ENCODE measurements at regions of chr12 and their contacts with region 1.

Region 1: DNA sequence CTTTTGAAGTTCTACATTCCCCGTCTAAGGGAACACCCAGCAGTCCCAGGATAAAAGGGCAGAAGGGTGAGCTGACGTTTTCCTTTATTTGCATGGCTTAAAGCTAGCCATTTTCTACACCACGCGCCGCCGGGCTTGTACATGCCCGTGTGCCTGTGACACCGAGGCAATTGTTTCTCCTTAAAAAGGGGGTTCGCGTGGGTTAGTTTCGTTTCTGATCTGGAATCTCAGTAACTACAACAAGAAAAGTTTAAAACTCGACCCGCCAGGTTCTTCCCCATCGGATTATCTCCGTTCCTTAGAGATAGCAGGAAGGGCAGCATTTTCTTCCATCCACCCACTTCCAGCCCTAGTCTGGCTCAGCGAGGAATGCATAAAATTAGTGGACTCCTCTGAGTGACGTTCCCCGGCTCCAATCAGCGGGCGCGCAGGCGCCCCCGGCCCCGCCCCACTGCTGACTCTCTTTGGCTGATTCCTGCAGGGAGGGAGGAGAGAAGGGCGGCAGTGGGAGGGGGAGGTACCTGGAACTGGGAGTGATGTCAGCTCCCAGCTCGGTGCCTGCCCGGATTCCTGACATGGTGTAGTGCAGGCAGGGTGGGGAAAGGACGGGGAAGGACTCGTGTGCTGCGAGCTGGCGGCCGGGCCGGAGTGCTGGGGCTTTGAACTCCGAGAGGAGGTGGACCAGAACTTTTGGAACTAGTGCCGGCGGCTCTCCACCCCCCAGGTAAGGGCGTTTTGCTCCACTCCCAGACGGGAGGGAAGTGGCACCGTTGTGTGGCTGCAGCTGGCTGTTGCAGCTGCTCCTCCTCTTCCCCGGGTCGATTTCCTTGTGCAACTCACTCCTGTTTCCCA is at the start of gene PPFIBP1:
- DNase-seq: peak; percentile 99
- H3K4me3 Mint-ChIP-seq: peak within 1 kb of the TSS; percentile 85
- H3K27ac Mint-ChIP-seq: peak within 1 kb of the TSS; percentile 90
- H3K4me1 Mint-ChIP-seq: peaks cover 23% of the 10 kb centered on the region
- H3K27me3 Mint-ChIP-seq: no peaks in the 10 kb centered on the region
- CTCF ChIP-seq: no peak
- total RNA-seq, gene PPFIBP1: 82.6 and 87.7 TPM in 2 replicates

Region 2: DNA sequence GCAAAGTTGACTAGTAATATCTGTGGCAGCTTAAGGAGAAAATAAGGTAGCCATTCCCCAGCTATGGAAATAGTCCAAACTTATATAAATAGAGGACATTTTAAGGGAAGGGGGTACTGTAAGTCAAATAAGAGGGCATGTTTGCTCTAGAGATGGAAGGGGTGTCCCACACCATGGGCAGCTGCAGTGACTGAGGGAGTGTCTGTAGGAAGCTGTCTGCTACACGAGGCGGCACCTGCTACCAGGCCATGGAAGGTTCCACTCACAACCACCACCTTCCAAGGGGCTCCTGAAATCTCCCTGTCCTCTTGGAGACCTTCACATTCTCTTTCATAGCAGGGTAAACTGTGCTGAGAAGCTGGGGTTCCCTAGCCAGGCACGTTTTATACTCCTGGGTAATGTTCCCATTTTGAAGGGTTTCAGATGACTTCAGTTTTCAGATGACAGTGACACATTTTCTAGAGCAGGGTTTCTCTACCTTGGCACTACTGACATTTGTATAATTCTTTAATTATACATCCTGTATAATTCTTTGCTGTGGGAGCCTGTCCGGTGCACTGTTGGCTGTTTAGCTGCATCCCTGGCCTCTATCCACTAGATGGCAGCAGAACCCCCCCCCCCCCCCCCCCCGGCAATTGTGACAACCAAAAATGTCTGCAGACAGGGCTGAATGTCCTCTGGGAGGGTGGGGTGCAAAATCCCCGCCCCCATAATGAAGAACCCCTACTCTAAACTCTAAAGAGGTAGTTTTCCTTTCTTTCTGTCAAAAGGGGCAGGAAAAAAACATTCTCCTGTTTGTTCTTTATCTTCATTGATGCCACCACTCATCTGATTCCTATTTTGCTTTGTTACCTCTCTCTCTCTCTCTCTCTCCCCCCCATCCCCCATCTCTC is 88.9 kb before region 1 on chr12:
- CTCF ChIA-PET with region 1: interaction called, 28 read pairs
- POLR2A ChIA-PET with region 1: interaction called, 43 read pairs
- intact Hi-C with region 1: loop called (anchors 2 kb)
- DNase-seq: peak; percentile 19
- H3K4me3 Mint-ChIP-seq: no peak overlapping the region
- H3K27ac Mint-ChIP-seq: no peak overlapping the region
- H3K4me1 Mint-ChIP-seq: peaks cover 7% of the 10 kb centered on the region
- H3K27me3 Mint-ChIP-seq: no peaks in the 10 kb centered on the region
- CTCF ChIP-seq: peak; percentile 57

Region 3: DNA sequence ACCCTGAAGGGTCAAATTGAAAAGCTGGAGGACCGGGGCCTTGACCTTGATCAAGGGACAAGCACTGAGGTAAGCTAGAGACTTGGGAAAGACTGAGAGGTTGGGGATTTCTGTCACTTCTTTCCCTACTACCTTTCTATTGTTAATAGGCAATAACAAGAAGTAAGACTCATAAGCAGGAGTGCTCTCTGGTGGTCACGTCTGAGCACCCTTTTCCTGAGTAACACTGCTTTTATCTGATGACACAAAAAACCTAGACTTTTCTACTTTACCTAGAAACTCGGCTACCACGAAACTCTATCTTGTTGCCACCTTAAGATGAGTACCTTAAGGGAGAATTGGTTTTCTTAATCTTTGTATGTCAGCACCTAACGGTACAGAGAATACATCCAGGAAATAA is 35.4 kb before region 1 on chr12:
- CTCF ChIA-PET with region 1: no interaction called
- POLR2A ChIA-PET with region 1: no interaction called
- intact Hi-C with region 1: no loop called
- DNase-seq: no peak
- H3K4me3 Mint-ChIP-seq: no peak overlapping the region
- H3K27ac Mint-ChIP-seq: no peak overlapping the region
- H3K4me1 Mint-ChIP-seq: no peaks in the 10 kb centered on the region
- H3K27me3 Mint-ChIP-seq: no peaks in the 10 kb centered on the region
- CTCF ChIP-seq: no peak

Region 4: GRCh38 chr12:27534060-27534764 is 10.3 kb after region 1 on chr12:
- CTCF ChIA-PET with region 1: interaction called, 17 read pairs
- POLR2A ChIA-PET with region 1: interaction called, 129 read pairs
- intact Hi-C with region 1: no loop called
- DNase-seq: no peak
- H3K4me3 Mint-ChIP-seq: no peak overlapping the region
- H3K27ac Mint-ChIP-seq: peak overlapping the region; percentile 0
- H3K4me1 Mint-ChIP-seq: peaks cover 26% of the 10 kb centered on the region
- H3K27me3 Mint-ChIP-seq: no peaks in the 10 kb centered on the region
- CTCF ChIP-seq: no peak

Region 5: DNA sequence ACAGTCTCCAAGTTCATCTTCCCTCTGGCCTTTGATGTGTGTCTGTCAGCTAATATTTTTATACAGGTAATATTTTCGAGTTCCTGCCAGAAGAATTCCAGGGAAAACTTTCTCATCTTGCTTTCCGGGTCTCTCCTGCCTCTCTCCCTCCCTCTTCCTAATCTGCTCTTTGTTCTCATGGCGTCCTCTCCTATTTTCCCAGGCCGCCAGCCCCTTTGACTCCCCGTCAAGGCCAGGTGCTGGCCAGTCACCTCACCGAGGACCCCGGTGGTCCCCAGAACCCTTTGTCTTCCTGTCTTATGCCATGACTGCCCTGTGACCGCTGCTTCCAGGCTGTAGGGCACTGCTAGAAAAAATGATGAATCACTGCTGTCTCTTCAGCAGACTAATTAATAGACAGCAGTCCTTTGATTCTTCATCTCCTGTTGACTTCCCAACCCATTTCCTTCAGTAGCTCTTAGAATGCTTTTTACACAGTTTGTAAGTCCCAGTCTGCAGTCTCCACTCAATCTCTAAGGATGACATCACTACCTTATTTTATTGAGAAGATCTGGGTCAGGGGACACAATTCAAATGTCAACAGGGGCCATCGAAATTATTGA is 40.8 kb after region 1 on chr12:
- CTCF ChIA-PET with region 1: interaction called, 4 read pairs
- POLR2A ChIA-PET with region 1: interaction called, 15 read pairs
- intact Hi-C with region 1: no loop called
- DNase-seq: no peak
- H3K4me3 Mint-ChIP-seq: peak overlapping the region; percentile 62
- H3K27ac Mint-ChIP-seq: peak overlapping the region; percentile 79
- H3K4me1 Mint-ChIP-seq: peaks cover 27% of the 10 kb centered on the region
- H3K27me3 Mint-ChIP-seq: no peaks in the 10 kb centered on the region
- CTCF ChIP-seq: no peak

Region 6: DNA sequence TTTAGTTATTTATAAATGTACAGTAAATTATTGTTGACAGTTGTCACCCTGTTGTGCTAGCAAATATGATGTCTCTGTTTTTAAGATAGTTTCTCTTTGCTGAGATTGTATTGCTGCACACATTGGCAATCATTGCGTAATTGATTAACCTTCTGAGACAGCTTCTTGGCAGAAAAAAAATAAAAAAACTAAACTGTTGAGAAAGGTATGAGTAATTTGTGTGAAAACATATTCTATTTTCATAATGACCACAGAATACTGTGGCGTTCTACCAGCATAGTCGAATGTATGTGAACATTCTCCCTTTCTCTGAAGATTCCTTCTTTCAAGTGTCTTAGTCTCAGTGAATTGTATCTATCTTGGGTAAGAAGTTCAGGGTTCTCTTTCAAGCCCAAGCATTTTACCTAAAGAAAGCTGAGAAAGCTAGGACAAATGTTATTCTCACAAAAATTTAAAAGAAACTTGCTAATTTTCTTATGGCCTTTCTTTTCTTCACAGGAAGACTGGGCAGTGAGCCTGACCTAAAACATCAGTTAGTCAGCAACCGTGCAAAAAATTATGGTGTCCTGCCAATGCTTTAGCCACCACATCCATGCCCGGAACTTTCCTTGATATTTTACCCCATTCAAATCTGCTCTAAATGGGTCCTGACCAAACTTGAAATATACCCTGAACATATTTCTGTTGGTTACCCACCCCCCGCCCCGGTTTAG is 103.4 kb after region 1 on chr12:
- CTCF ChIA-PET with region 1: no interaction called
- POLR2A ChIA-PET with region 1: interaction called, 61 read pairs
- intact Hi-C with region 1: loop called (anchors 2 kb)
- DNase-seq: peak; percentile 83
- H3K4me3 Mint-ChIP-seq: peak overlapping the region; percentile 57
- H3K27ac Mint-ChIP-seq: peak overlapping the region; percentile 89
- H3K4me1 Mint-ChIP-seq: peaks cover 33% of the 10 kb centered on the region
- H3K27me3 Mint-ChIP-seq: no peaks in the 10 kb centered on the region
- CTCF ChIP-seq: no peak

Region 7: DNA sequence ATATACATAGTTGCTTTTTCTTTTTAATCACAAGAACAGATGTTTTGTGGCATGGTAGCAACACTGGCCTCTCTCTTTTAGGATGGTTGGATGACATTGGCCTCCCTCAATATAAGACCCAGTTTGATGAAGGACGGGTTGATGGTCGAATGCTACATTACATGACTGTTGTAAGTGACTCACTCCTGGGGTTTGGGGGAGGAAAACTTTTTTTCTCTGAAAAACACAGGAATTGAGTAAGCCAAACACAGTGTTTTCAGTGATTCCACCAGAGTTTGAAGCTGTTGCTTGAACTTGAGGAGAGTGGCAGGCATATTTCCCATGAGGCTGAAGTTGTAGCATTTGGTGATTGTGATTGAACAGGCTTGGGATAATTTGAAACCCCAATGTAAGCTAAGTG is 158.7 kb after region 1 on chr12:
- CTCF ChIA-PET with region 1: no interaction called
- POLR2A ChIA-PET with region 1: no interaction called
- intact Hi-C with region 1: no loop called
- DNase-seq: no peak
- H3K4me3 Mint-ChIP-seq: no peak overlapping the region
- H3K27ac Mint-ChIP-seq: no peak overlapping the region
- H3K4me1 Mint-ChIP-seq: no peaks in the 10 kb centered on the region
- H3K27me3 Mint-ChIP-seq: no peaks in the 10 kb centered on the region
- CTCF ChIP-seq: no peak